Dorsolateral prefrontal cortex (tissue), 120 donors: ENCODE measurements at regions of chr20 and their contacts with region 1.

Region 1: GRCh38 chr20:3795511-3796468 is at the start of gene CDC25B:
- DNase-seq: peak; percentile 90 to 98 (median 97)
- H3K4me3 ChIP-seq: peak within 1 kb of the TSS; percentile 60 to 100 (median 78)
- H3K27ac ChIP-seq: peak within 1 kb of the TSS; percentile 90 to 100 (median 99)
- H3K27me3 ChIP-seq: no peaks in the 10 kb centered on the region
- CTCF ChIP-seq: peak in 52 of 56 donors; percentile 7 to 67 (median 47)
- total RNA-seq, gene CDC25B: 30.5 to 72.6 (median 46.2) TPM

Region 2: GRCh38 chr20:3811467-3812258 is 15.9 kb after region 1 on chr20:
- intact Hi-C with region 1: loop called (anchors 1 to 2 kb)
- DNase-seq: peak; percentile 94 to 99 (median 97)
- H3K4me3 ChIP-seq: peak overlapping the region; percentile 18 to 71 (median 49)
- H3K27ac ChIP-seq: peak overlapping the region; percentile 92 to 100 (median 98)
- H3K27me3 ChIP-seq: no peaks in the 10 kb centered on the region
- CTCF ChIP-seq: peak in 26 of 56 donors; percentile 2 to 53 (median 24)

Region 3: DNA sequence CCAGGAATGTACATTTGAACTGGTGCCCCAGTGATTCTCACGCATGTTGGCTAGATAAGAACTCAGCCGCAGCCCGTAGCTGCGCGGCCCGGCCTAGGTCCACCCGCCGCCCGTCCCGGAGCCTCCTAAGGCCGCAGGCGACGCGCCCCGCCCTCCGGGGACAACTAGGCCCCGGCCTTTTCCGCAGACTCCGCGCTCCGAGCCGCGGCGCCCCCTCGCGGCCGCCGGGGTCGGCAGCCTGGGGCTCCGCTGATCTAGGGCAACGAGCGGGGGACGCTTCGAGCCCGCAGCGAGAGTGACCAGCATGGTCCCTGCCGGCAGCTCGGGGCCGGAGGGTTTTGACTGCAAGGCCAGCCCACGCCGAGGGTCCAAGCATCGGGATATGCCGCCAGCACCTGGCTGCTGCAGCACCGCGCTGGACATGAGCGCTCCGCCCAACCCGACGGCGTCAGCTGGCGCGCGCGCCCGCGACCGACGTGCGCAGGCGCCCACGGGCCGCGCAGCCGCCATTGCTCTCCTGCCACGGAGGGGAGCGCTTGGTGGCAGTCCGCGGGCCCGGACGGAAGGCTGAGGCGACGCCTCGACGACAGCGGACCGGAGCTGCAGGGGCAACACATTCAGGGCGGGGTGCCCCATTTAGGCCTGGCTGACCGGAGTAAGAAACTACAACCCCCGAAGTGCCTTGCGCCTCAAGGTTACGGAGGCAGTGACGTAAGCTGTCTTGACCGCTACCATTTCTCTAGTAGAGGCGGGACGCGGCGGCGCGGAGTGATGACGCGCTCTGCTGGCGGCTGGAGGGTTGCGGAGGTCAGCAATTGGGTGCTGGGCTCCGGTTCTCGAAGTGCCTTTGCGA is 24.5 kb after region 1 on chr20 and contains the start of gene AP5S1:
- intact Hi-C with region 1: loop called (anchors 1 to 2 kb)
- DNase-seq: peak; percentile 95 to 98 (median 97)
- H3K4me3 ChIP-seq: peak within 1 kb of the TSS; percentile 47 to 96 (median 80)
- H3K27ac ChIP-seq: peak within 1 kb of the TSS; percentile 94 to 100 (median 100)
- H3K27me3 ChIP-seq: no peaks in the 10 kb centered on the region
- CTCF ChIP-seq: peak in 55 of 56 donors; percentile 86 to 100 (median 99)
- total RNA-seq, gene AP5S1: 9.8 to 22.0 (median 15.9) TPM

Region 4: GRCh38 chr20:3846740-3847428 is 51.1 kb after region 1 on chr20 and contains the start of gene MAVS:
- intact Hi-C with region 1: loop called in 1 of 2 experiments (anchors 2 kb)
- DNase-seq: peak; percentile 76 to 95 (median 86)
- H3K4me3 ChIP-seq: peak within 1 kb of the TSS; percentile 52 to 100 (median 98)
- H3K27ac ChIP-seq: peak within 1 kb of the TSS; percentile 42 to 97 (median 92)
- H3K27me3 ChIP-seq: no peaks in the 10 kb centered on the region
- CTCF ChIP-seq: peak in 27 of 56 donors; percentile 4 to 45 (median 17)
- total RNA-seq, gene MAVS: 17.4 to 50.9 (median 25.6) TPM